A673 (cell line): ENCODE measurements at regions of chr20 and their contacts with region 1.

Region 1: GRCh38 chr20:61693055-61693600 is 372.6 kb downstream of the TAF4 start:
- DNase-seq: no peak
- H3K4me3 ChIP-seq: no peak overlapping the region
- H3K27ac ChIP-seq: no peak overlapping the region
- H3K4me1 ChIP-seq: no peaks in the 10 kb centered on the region
- H3K27me3 ChIP-seq: peaks cover 37% of the 10 kb centered on the region
- CTCF ChIP-seq: no peak

Region 2: GRCh38 chr20:60862601-60863000 is 830.5 kb before region 1 on chr20:
- CTCF ChIA-PET with region 1: no interaction called
- POLR2A ChIA-PET with region 1: no interaction called
- intact Hi-C with region 1: no loop called
- DNase-seq: no peak
- H3K4me3 ChIP-seq: no peak overlapping the region
- H3K27ac ChIP-seq: no peak overlapping the region
- H3K4me1 ChIP-seq: no peaks in the 10 kb centered on the region
- H3K27me3 ChIP-seq: peaks cover 41% of the 10 kb centered on the region
- CTCF ChIP-seq: no peak

Region 3: GRCh38 chr20:61436678-61437279 is 256.3 kb before region 1 on chr20:
- CTCF ChIA-PET with region 1: no interaction called
- POLR2A ChIA-PET with region 1: no interaction called
- intact Hi-C with region 1: no loop called
- DNase-seq: peak; percentile 99
- H3K4me3 ChIP-seq: no peak overlapping the region
- H3K27ac ChIP-seq: peak overlapping the region; percentile 95
- H3K4me1 ChIP-seq: peaks cover 63% of the 10 kb centered on the region
- H3K27me3 ChIP-seq: no peaks in the 10 kb centered on the region
- CTCF ChIP-seq: peak; percentile 42

Region 4: GRCh38 chr20:61679473-61679872 is 13.7 kb before region 1 on chr20:
- CTCF ChIA-PET with region 1: interaction called, 10 read pairs
- POLR2A ChIA-PET with region 1: no interaction called
- intact Hi-C with region 1: no loop called
- DNase-seq: no peak
- H3K4me3 ChIP-seq: no peak overlapping the region
- H3K27ac ChIP-seq: no peak overlapping the region
- H3K4me1 ChIP-seq: no peaks in the 10 kb centered on the region
- H3K27me3 ChIP-seq: peaks cover 50% of the 10 kb centered on the region
- CTCF ChIP-seq: no peak